ENCODE measurements at regions of chr1 and their contacts with region 1.

Region 1: GRCh38 chr1:171807556-171807955 is 26.1 kb downstream of the METTL13 start:
- DNase-seq: no peak
- H3K4me3 Mint-ChIP-seq: no peak overlapping the region
- H3K27ac Mint-ChIP-seq: no peak overlapping the region
- H3K4me1 Mint-ChIP-seq: peaks cover 8% of the 10 kb centered on the region
- H3K27me3 Mint-ChIP-seq: no peaks in the 10 kb centered on the region

Region 2: DNA sequence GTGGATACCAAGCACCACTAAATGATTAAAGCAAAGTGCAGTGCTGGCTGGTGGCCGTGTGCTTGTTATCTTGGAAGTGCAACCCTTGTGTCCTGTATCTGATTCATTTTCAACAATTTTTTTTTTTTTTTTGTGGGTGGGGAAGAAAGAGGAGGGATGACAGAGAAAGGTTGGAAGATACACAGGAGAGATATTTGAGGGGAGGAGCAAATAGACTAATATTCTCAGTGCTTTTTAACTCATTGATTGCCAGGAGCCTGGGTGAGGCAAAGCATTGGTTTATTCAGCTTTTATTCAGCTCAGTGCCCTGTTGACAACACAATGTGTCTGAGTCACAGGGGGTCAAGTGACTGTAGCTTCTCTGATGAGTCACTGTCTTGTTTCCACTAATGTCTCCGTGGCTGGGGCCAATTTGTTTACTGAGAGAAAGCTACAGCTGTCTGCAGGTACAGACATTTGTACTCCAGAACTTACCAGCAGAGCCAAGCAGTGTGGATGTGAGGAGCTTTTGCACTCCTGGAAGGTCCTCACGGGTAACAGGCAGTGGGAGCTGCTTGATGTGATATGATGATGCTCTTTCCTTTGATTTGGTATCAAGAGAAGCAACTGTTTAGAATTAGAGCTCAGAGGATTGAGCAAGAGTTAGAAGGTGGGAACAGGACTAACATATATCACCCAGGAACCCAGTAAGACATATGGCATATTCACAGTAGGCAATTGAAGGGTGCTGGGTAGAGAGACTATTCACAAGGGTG is 10.1 kb after region 1 on chr1:
- CTCF ChIA-PET with region 1: interaction called, 10 read pairs
- POLR2A ChIA-PET with region 1: no interaction called
- DNase-seq: peak; percentile 21
- H3K4me3 Mint-ChIP-seq: no peak overlapping the region
- H3K27ac Mint-ChIP-seq: peak overlapping the region; percentile 31
- H3K4me1 Mint-ChIP-seq: peaks cover 24% of the 10 kb centered on the region
- H3K27me3 Mint-ChIP-seq: no peaks in the 10 kb centered on the region

Region 3: GRCh38 chr1:171841050-171841940 is 33.7 kb after region 1 on chr1 and contains the start of gene DNM3:
- CTCF ChIA-PET with region 1: no interaction called
- POLR2A ChIA-PET with region 1: no interaction called
- DNase-seq: peak; percentile 69
- H3K4me3 Mint-ChIP-seq: peak within 1 kb of the TSS; percentile 75
- H3K27ac Mint-ChIP-seq: peak within 1 kb of the TSS; percentile 64
- H3K4me1 Mint-ChIP-seq: peaks cover 15% of the 10 kb centered on the region
- H3K27me3 Mint-ChIP-seq: peaks cover 26% of the 10 kb centered on the region
- total RNA-seq, gene DNM3: 2.1 TPM

Measured in activated CD4-positive, alpha-beta T cell treated with anti-CD3 and anti-CD28 coated beads, Interleukin-2, amount 10 ng/mL, durations not matched to agents 7 days and 5 days (primary cell).